OCI-LY7 (cell line): ENCODE measurements at regions of chr17 and their contacts with region 1.

Region 1: DNA sequence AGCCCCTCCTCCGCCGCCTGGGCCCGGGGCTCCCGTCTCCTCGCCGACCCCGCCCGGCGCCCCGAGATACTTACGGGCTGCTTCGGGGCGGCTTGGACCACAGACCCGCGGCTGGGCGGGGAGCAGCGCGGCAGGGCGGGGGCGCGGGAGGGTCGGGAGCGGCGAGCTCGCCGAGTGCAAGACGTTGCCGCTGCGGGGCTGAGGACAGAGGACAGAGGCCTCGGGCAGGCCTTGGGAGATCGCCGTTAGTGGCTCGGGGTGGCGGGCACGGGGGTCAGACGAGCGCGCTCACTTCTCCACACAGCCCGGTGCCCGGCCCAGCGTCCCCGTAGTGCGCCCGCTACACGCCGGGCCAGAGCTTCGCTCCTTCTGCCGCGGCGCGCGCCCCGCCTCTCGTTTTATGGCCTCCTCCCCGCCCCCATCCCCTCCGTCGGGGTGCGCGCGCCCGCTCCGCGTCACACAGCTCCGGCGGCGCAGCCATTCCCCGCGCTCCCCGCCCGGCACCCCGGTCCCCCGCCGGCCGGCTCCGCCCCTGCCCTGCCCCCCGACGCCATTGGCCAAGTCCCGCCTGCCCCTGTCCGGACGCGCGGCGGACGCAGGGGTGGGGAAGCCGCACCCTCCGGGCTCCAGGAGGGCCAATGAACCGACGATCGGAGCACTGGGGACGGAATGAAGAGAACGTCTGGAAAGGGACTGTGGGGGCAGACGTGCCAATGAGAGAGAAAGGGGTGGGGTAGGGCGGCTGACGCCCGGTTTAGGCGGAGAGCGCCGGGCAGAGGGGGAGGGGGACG is at the start of gene TOB1:
- DNase-seq: peak; percentile 95
- H3K4me3 ChIP-seq: peak within 1 kb of the TSS; percentile 72
- H3K27ac ChIP-seq: peak within 1 kb of the TSS; percentile 93
- H3K4me1 ChIP-seq: peaks cover 16% of the 10 kb centered on the region
- CTCF ChIP-seq: no peak
- total RNA-seq, gene TOB1: 12.7 and 15.2 TPM in 2 replicates

Region 2: GRCh38 chr17:50661795-50662391 is 204.3 kb before region 1 on chr17:
- CTCF ChIA-PET with region 1: no interaction called
- POLR2A ChIA-PET with region 1: no interaction called
- intact Hi-C with region 1: no loop called
- DNase-seq: peak; percentile 9
- H3K4me3 ChIP-seq: no peak overlapping the region
- H3K27ac ChIP-seq: no peak overlapping the region
- H3K4me1 ChIP-seq: peaks cover 8% of the 10 kb centered on the region
- CTCF ChIP-seq: no peak

Region 3: GRCh38 chr17:50707289-50708049 is 158.7 kb before region 1 on chr17 and contains the start of gene ANKRD40:
- CTCF ChIA-PET with region 1: no interaction called
- POLR2A ChIA-PET with region 1: no interaction called
- intact Hi-C with region 1: loop called (anchors 5 kb)
- DNase-seq: peak; percentile 91
- H3K4me3 ChIP-seq: peak within 1 kb of the TSS; percentile 92
- H3K27ac ChIP-seq: peak within 1 kb of the TSS; percentile 86
- H3K4me1 ChIP-seq: peaks cover 32% of the 10 kb centered on the region
- CTCF ChIP-seq: no peak
- total RNA-seq, gene ANKRD40: 25.7 and 27.7 TPM in 2 replicates

Region 4: DNA sequence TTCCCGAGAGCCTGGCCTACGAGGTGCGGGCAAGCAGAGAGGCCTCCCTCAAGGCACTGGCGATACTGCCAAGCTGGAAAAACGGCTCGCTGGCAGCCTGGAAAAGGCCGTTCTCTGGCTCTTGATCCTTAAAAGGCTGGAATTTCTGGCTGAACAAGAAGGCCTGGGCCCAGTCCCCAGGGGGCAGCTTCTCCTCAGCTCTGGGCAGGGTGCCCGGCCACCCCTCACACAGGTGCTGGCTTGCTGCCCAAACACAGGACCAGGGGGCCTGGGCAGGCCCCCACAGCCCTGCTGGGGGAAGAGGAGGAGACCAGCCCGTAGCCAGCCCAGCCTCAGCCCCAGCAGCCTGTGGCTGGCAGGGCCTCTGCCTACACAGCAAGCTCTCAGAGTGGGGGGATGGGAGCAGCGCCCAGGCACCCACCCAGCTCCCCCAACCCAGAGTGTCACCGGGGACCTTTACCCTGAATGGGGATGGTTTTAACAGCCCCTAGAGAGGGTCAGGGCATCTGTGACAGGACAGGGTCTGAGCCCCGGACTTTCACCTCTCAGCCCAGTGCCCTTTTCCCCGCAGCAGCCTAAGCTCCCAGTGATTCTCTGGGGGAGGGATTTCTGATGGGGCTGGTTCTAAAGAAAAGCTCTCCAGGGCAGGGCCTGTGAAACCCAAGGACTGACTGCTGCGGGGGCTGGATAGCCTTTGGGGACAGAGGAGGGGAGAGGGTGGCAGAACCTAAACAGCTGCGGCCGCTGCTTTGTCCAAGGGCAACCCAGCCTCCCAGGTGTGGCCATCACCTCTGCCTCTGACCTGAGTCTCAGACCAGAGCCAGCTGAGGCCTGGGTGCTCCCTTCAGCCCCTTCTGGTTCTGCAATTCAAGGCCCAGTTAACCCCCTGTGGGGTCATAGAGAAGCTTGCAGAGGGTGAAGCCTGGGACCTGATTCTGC is 38.6 kb after region 1 on chr17:
- CTCF ChIA-PET with region 1: no interaction called
- POLR2A ChIA-PET with region 1: interaction called, 17 read pairs
- intact Hi-C with region 1: loop called (anchors 1 kb)
- DNase-seq: peak; percentile 23
- H3K4me3 ChIP-seq: peak overlapping the region; percentile 33
- H3K27ac ChIP-seq: peak overlapping the region; percentile 57
- H3K4me1 ChIP-seq: peaks cover 39% of the 10 kb centered on the region
- CTCF ChIP-seq: no peak

Region 5: DNA sequence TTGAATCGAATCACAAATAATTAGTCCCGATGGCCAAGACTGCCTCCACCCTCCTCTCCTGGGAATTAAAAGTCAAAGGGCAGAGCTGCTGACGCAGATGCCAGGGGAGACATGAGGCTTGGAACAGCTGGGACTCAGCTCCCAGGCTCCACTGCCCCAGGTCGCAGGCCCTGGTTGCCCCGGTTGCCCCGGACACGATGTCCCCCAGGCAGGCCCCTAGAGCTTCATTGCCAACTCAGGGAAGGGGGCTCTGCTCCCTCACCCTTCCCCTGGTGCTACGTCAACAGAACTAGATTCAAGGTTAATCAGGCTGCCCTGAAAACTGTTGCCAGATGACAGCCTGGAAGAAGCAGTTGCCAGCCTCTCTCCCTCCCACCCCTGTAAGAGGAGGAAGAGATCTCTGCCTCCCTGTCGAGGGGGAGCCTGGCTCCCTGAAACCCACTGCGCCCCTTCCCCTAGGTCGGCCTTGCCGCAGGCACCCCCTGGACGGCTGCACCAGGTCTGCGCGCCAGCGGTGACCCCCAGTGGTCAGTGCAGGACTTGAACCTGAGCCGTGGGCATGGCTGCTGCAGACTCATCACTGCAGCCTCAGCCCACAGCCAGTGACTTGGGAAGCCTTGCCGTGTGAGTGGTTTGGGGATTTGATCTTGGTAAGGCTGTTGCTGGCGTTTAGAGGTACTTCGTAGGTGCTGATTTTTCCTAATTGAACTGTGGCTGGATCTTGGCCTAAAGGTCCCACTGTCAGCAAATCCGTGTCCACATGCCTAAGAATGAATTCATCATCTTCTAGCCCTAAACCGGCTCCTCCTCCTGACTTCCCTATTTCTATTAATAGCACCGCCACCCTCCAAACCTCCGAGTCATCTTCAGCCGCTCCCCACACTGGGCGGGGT is 84.1 kb after region 1 on chr17:
- CTCF ChIA-PET with region 1: interaction called, 3 read pairs
- POLR2A ChIA-PET with region 1: interaction called, 9 read pairs
- intact Hi-C with region 1: loop called (anchors 1 kb)
- DNase-seq: peak; percentile 70
- H3K4me3 ChIP-seq: no peak overlapping the region
- H3K27ac ChIP-seq: no peak overlapping the region
- H3K4me1 ChIP-seq: peaks cover 11% of the 10 kb centered on the region
- CTCF ChIP-seq: peak; percentile 89

Region 6: GRCh38 chr17:51238255-51238887 is 372.2 kb after region 1 on chr17:
- CTCF ChIA-PET with region 1: no interaction called
- POLR2A ChIA-PET with region 1: no interaction called
- intact Hi-C with region 1: loop called (anchors 10 kb)
- DNase-seq: peak; percentile 78
- H3K4me3 ChIP-seq: peak overlapping the region; percentile 58
- H3K27ac ChIP-seq: peak overlapping the region; percentile 84
- H3K4me1 ChIP-seq: peaks cover 56% of the 10 kb centered on the region
- CTCF ChIP-seq: no peak